B cell (primary cell): ENCODE measurements at regions of chr14 and their contacts with region 1.

Region 1: DNA sequence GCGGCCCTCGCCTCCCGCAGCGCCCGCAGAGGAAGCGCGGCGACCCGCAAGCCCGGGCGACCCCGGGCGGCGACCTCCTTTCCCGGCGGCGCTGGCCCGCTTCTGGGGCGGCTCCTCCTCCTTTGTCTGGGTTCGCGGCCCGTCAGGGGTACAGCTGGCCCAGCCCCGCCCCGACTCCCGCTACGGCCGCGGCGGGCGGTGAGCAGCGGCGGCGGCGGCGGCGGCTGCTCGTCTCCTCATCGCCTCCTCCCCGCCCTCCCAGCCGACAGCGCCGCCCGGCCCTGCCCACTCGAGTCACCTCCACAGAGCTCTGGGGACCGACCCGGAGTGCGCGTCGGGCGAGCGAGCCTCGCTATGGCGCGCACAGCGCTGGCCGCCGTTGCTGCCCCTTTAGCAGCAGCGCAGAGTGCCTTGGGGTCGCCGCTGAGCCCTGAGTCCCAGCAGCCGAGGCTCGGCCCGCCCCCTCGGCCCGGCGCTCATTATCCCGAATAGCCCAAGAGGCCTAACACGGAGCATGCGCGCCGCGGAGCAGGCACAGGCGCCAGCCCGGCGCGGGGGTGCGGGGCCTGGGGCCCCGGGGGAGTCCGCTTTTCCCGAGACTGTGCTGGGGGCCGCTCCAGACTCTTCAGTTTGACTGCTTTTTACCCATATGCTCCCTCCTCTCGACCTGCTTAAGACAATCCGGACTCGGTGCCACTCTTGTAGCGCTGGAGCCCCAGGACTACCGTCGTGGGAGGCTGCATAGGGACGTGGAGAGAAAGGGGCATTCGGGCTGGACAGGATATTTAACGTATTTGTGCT is at the start of gene SOS2:
- DNase-seq: peak; percentile 93
- ATAC-seq: peak; percentile 88
- H3K4me3 ChIP-seq: peak within 1 kb of the TSS; percentile 76 to 94 (median 87)
- H3K4me3 Mint-ChIP-seq: peak within 1 kb of the TSS; percentile 95
- H3K27ac ChIP-seq: peak within 1 kb of the TSS; percentile 83 to 88
- H3K27ac Mint-ChIP-seq: peak within 1 kb of the TSS; percentile 97
- H3K4me1 ChIP-seq: peaks cover 14 to 17% of the 10 kb centered on the region in 2 donors
- H3K4me1 Mint-ChIP-seq: peaks cover 30% of the 10 kb centered on the region
- H3K27me3 ChIP-seq: no peaks in the 10 kb centered on the region
- H3K27me3 Mint-ChIP-seq: no peaks in the 10 kb centered on the region
- CTCF ChIP-seq: no peak
- total RNA-seq, gene SOS2: 51.0 and 55.3 TPM in 2 replicates

Region 2: GRCh38 chr14:49692811-49693734 is 538.6 kb before region 1 on chr14 and contains the start of gene KLHDC1:
- CTCF ChIA-PET with region 1: no interaction called
- POLR2A ChIA-PET with region 1: no interaction called
- intact Hi-C with region 1: loop called (anchors 1 kb)
- DNase-seq: peak; percentile 85
- ATAC-seq: peak; percentile 78
- H3K4me3 ChIP-seq: peak within 1 kb of the TSS; percentile 44 to 74 (median 72)
- H3K4me3 Mint-ChIP-seq: peak within 1 kb of the TSS; percentile 92
- H3K27ac ChIP-seq: peak within 1 kb of the TSS; percentile 47 to 83
- H3K27ac Mint-ChIP-seq: peak within 1 kb of the TSS; percentile 87
- H3K4me1 ChIP-seq: peaks cover 9 to 11% of the 10 kb centered on the region in 2 donors
- H3K4me1 Mint-ChIP-seq: peaks cover 23% of the 10 kb centered on the region
- H3K27me3 ChIP-seq: no peaks in the 10 kb centered on the region
- H3K27me3 Mint-ChIP-seq: no peaks in the 10 kb centered on the region
- CTCF ChIP-seq: no peak
- total RNA-seq, gene KLHDC1: 11.7 and 13.7 TPM in 2 replicates

Region 3: DNA sequence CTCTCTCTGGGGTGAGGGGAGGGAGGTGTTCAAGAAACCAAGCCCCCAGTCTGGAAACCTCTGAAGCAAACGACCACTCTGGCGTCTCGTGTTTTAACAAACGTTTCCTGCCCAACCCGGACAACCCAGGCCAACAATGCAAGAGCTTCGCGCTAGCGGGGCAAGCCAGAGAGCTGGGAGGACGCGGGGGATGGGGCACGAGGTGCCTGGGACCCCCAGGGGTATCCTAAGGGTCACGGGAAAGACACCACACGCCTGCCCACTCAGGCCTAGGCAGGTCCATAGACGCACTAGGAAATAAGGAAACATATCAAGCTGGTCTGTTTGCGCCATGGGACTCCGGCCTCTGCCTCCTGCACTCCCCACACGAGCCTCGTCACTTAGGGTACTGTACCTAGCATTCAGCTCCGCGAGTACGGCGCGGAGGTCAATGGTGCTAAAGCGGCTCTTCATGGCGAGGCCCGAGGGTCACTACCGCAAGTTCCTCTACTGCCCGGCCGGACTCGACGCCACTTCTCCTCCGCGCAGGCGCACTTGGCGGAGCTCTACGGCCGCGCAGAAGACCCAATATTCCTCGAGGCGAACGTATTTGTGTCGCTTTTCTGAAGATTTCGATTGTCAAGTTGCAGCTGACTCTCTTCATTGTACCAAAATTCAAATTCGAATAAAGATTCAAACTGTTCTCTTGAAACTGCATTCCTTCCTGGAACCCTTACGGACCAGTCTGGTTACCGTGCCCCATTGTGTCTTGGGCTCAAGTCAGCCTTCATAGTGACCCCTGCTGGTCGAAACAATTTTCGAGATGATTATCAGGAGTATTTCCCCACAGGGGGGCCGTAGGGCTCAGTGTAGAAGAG is 379.1 kb before region 1 on chr14 and contains the start of gene NEMF:
- CTCF ChIA-PET with region 1: interaction called, 3 read pairs
- POLR2A ChIA-PET with region 1: interaction called, 4 read pairs
- intact Hi-C with region 1: loop called (anchors 2 kb)
- DNase-seq: peak; percentile 94
- ATAC-seq: peak; percentile 84
- H3K4me3 ChIP-seq: peak within 1 kb of the TSS; percentile 78 to 99 (median 99)
- H3K4me3 Mint-ChIP-seq: peak within 1 kb of the TSS; percentile 98
- H3K27ac ChIP-seq: peak within 1 kb of the TSS; percentile 72 to 88
- H3K27ac Mint-ChIP-seq: peak within 1 kb of the TSS; percentile 98
- H3K4me1 ChIP-seq: peaks cover 20 to 31% of the 10 kb centered on the region in 2 donors
- H3K4me1 Mint-ChIP-seq: peaks cover 44% of the 10 kb centered on the region
- H3K27me3 ChIP-seq: no peaks in the 10 kb centered on the region
- H3K27me3 Mint-ChIP-seq: no peaks in the 10 kb centered on the region
- CTCF ChIP-seq: peak; percentile 86
- total RNA-seq, gene NEMF: 127 and 146 TPM in 2 replicates

Region 4: GRCh38 chr14:50116181-50116956 is 115.3 kb before region 1 on chr14 and contains the start of gene VCPKMT:
- CTCF ChIA-PET with region 1: no interaction called
- POLR2A ChIA-PET with region 1: no interaction called
- intact Hi-C with region 1: loop called (anchors 2 kb)
- DNase-seq: peak; percentile 97
- ATAC-seq: peak; percentile 97
- H3K4me3 ChIP-seq: peak within 1 kb of the TSS; percentile 69 to 92 (median 87)
- H3K4me3 Mint-ChIP-seq: peak within 1 kb of the TSS; percentile 98
- H3K27ac ChIP-seq: peak within 1 kb of the TSS; percentile 92 to 99
- H3K27ac Mint-ChIP-seq: peak within 1 kb of the TSS; percentile 98
- H3K4me1 ChIP-seq: peaks cover 44 to 45% of the 10 kb centered on the region in 2 donors
- H3K4me1 Mint-ChIP-seq: peaks cover 45% of the 10 kb centered on the region
- H3K27me3 ChIP-seq: no peaks in the 10 kb centered on the region
- H3K27me3 Mint-ChIP-seq: no peaks in the 10 kb centered on the region
- CTCF ChIP-seq: no peak
- total RNA-seq, gene VCPKMT: 22.8 and 27.1 TPM in 2 replicates

Region 5: DNA sequence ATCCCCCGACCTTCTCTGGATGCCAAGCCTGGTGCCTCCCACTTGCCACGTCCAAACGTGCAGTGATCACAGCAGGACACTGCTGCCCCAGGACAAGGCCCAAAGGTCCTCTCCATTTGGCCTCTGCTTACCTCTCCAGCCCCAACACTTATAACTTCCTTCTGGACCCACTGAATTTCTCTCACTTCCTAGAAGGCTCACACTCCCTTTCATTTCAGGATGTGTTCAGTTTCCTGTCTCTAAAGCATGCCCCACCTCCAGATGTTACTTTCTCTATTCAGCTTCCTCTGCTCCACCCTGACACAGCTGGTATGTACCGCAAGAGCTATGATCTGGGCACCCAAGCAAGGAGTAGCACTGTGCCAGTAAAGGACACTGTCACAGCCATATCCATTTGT is 132.0 kb after region 1 on chr14:
- CTCF ChIA-PET with region 1: no interaction called
- POLR2A ChIA-PET with region 1: no interaction called
- intact Hi-C with region 1: loop called (anchors 2 kb)
- DNase-seq: peak; percentile 87
- ATAC-seq: peak; percentile 98
- H3K4me3 ChIP-seq: peak overlapping the region; percentile 44 to 82 (median 58)
- H3K4me3 Mint-ChIP-seq: peak overlapping the region; percentile 84
- H3K27ac ChIP-seq: peak overlapping the region; percentile 87 to 90
- H3K27ac Mint-ChIP-seq: peak overlapping the region; percentile 88
- H3K4me1 ChIP-seq: peaks cover 21 to 33% of the 10 kb centered on the region in 2 donors
- H3K4me1 Mint-ChIP-seq: peaks cover 46% of the 10 kb centered on the region
- H3K27me3 ChIP-seq: no peaks in the 10 kb centered on the region
- H3K27me3 Mint-ChIP-seq: no peaks in the 10 kb centered on the region
- CTCF ChIP-seq: no peak